ENCODE measurements at regions of chr5 and their contacts with region 1.

Region 1: GRCh38 chr5:170434966-170435605 is 45.9 kb upstream of the KCNMB1 start:
- DNase-seq: peak; percentile 77
- CTCF ChIP-seq: peak; percentile 94

Region 2: DNA sequence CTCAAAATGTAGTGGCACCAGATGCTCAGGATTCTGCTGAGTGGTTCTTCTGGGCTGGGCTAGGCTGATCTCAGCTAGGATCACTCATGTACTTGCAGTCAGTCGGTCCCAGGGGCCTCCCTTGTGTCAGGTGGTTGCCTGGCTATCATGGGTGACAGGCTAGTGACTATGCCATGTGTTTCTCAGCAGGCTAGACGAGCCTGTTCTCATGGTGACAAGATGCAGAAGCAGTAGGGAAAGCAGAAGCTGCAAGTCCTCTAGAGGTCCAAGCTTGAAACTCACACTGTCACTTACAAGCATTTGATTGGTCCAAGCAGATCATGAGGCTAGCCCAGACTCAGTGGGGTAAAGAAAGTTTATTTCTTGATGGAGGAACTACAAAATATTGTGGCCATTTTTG is 30.7 kb before region 1 on chr5:
- CTCF ChIA-PET with region 1: interaction called, 10 read pairs
- POLR2A ChIA-PET with region 1: no interaction called
- DNase-seq: no peak
- CTCF ChIP-seq: no peak

Region 3: DNA sequence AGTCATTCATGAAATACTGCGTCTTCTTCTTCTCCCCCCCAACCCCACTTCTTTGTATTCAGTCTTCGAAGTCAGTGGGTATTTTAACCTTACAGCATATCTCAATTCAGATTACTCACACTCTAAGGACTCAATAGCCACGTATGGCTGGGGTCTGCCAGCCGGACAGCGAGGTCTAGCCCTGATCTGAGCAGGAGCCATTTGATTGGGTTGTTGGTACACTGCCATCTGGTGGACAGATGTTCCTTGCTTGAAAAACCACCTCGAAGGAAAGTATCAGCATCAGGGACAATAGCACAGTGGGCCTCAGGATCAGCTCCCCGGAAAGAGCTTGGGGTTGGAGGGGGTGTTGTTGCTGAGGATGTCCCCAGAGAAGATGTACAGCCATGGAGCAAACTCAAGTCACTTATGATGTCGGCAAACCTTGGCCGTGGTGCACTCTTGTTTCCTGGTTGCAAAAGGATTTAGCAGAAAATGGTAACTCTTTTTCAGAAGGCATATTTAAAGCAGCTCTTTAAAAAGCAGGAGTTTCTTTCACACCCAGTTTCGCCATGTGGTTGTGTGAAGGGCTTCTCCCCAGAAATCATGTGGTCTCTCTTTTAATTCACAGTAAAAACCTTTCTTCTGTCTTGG is 14.2 kb before region 1 on chr5:
- CTCF ChIA-PET with region 1: interaction called, 59 read pairs
- POLR2A ChIA-PET with region 1: no interaction called
- DNase-seq: peak; percentile 74
- CTCF ChIP-seq: peak; percentile 51

Region 4: DNA sequence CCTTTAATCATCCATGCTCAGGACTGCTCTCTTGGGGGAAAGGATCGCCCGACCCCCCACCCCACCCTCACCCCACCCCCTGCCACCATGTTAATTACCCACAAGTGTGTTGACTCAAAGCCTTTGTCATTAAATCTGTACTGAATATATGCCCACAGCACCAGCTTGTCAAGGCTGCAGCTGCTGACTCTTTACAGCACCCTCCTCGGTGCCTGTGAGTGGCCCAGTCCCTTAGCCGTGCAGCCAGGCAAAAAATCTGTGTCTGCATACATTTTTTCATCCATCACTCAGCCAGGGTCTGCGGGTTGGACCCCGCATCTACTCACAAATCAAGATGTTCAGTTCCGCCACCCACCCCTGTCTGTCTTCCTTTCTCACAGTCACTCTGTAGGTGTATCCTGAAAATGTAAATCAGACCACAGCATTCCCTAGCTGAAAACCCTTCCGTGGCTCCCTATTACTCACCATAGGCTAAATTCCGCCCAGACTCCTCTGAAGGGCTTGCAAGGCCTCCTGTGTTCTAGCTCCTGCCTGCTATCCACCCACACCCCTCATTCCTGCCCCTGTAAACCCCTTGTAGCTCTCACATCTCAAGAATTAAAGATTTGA is 15.1 kb after region 1 on chr5:
- CTCF ChIA-PET with region 1: interaction called, 33 read pairs
- POLR2A ChIA-PET with region 1: no interaction called
- DNase-seq: no peak
- CTCF ChIP-seq: no peak

Region 5: GRCh38 chr5:170623576-170624181 is 188.6 kb after region 1 on chr5:
- CTCF ChIA-PET with region 1: interaction called, 27 read pairs
- POLR2A ChIA-PET with region 1: no interaction called
- DNase-seq: peak; percentile 50
- CTCF ChIP-seq: peak; percentile 38

Measured in GM10248 (cell line).